ENCODE measurements at regions of chr11 and their contacts with region 1.

Region 1: GRCh38 chr11:118198370-118198769 is 21.9 kb upstream of the SCN2B start:
- DNase-seq: peak; percentile 74 to 93 (median 85)

Region 2: GRCh38 chr11:117986981-117987574 is 211.3 kb before region 1 on chr11:
- intact Hi-C with region 1: no loop called
- DNase-seq: peak in 1 of 42 donors; percentile 16

Region 3: GRCh38 chr11:118364956-118365615 is 166.7 kb after region 1 on chr11:
- intact Hi-C with region 1: loop called (anchors 5 kb)
- DNase-seq: no peak